ENCODE measurements at regions of chr5 and their contacts with region 1.

Region 1: DNA sequence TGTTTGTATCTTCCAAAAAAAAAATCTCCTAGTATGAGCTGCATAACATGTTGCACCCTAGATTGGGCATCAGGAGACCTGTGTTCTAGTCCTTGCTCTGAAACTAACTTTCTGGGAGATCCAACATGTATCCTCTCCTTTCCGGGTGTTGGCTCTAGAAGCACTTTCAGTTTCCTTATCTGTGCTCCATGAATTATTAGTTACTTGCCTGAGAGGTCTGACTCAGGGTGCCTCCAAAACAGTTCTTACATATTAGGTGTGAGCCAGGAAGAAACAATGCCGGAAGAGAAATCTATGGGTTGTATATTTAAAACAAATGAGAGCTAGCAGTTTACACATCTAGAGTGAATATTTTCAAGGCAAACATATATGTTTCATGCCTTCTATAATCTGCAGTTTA is 36.7 kb upstream of the SLC36A2 start:
- DNase-seq: no peak
- H3K4me3 ChIP-seq: no peak overlapping the region
- H3K4me3 Mint-ChIP-seq: no peak overlapping the region
- H3K27ac Mint-ChIP-seq: no peak overlapping the region
- H3K4me1 ChIP-seq: no peaks in the 10 kb centered on the region
- H3K4me1 Mint-ChIP-seq: peaks cover 11% of the 10 kb centered on the region
- H3K27me3 ChIP-seq: no peaks in the 10 kb centered on the region
- H3K27me3 Mint-ChIP-seq: no peaks in the 10 kb centered on the region
- CTCF ChIP-seq: no peak

Region 2: GRCh38 chr5:151345808-151346478 is 38.2 kb before region 1 on chr5:
- CTCF ChIA-PET with region 1: no interaction called
- POLR2A ChIA-PET with region 1: no interaction called
- intact Hi-C with region 1: no loop called
- DNase-seq: no peak
- H3K4me3 ChIP-seq: no peak overlapping the region
- H3K4me3 Mint-ChIP-seq: no peak overlapping the region
- H3K27ac Mint-ChIP-seq: no peak overlapping the region
- H3K4me1 ChIP-seq: 0 out of 2 replicates have a peak, but pooled peaks cover 3% of the 10 kb centered on the region
- H3K4me1 Mint-ChIP-seq: no peaks in the 10 kb centered on the region
- H3K27me3 ChIP-seq: no peaks in the 10 kb centered on the region; the same call in 1 of the 2 replicates
- H3K27me3 Mint-ChIP-seq: peaks cover 4% of the 10 kb centered on the region
- CTCF ChIP-seq: no peak

Region 3: DNA sequence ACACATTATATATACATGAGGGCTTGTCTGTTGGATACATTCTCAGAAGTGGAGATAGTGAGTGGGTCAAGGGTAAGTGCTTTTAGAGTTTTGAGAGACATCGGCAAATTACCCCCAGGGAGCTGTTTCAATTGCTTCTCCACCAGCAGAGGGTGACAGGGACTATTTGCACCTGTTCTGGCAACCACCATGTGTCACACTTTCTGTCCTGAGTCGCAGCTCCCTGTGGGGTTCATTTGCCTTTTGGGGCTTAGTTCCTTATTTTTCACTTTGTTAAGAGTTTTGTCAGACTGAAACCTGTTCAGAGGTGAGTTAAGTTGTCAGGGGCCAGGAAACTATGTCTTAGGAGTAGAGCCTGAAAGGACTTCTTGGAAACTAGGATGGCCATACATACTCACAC is 43.2 kb after region 1 on chr5:
- CTCF ChIA-PET with region 1: interaction called, 3 read pairs
- POLR2A ChIA-PET with region 1: no interaction called
- intact Hi-C with region 1: loop called (anchors 2 kb)
- DNase-seq: no peak
- H3K4me3 ChIP-seq: no peak overlapping the region
- H3K4me3 Mint-ChIP-seq: no peak overlapping the region
- H3K27ac Mint-ChIP-seq: peak overlapping the region; percentile 34
- H3K4me1 ChIP-seq: peaks cover 21% of the 10 kb centered on the region
- H3K4me1 Mint-ChIP-seq: peaks cover 20% of the 10 kb centered on the region
- H3K27me3 ChIP-seq: no peaks in the 10 kb centered on the region
- H3K27me3 Mint-ChIP-seq: no peaks in the 10 kb centered on the region
- CTCF ChIP-seq: peak; percentile 27 to 41

Region 4: GRCh38 chr5:151463137-151464029 is 79.3 kb after region 1 on chr5:
- CTCF ChIA-PET with region 1: interaction called, 5 read pairs
- POLR2A ChIA-PET with region 1: no interaction called
- intact Hi-C with region 1: loop called (anchors 1 kb)
- DNase-seq: peak; percentile 46 to 57
- H3K4me3 ChIP-seq: no peak overlapping the region
- H3K4me3 Mint-ChIP-seq: no peak overlapping the region
- H3K27ac Mint-ChIP-seq: no peak overlapping the region
- H3K4me1 ChIP-seq: peaks cover 12% of the 10 kb centered on the region
- H3K4me1 Mint-ChIP-seq: peaks cover 8% of the 10 kb centered on the region
- H3K27me3 ChIP-seq: no peaks in the 10 kb centered on the region
- H3K27me3 Mint-ChIP-seq: no peaks in the 10 kb centered on the region
- CTCF ChIP-seq: peak; percentile 72 to 83